ENCODE measurements at regions of chr16 and their contacts with region 1.

Region 1: DNA sequence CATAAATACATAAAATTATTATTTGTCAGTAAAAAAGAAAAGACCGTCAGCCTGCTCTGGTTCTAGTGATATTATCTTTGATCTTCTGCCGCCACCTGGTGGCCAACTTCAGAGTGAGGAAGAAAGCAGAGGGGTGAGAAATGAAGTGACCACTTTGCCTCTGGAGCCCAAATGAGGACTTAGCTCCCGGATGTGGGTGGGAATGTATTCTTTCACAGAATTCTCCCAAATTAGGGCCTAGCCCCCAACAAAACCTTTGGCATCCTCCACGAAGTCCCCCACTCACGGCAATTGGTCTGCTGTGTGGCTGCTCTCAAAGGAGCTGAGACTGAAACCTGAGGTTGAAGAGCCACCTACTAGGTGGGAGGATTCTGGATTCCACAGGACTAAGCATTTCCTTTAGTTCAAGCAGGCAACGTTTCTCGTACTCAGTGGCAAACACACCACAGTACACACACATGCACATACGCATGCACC is 4.9 kb upstream of the ZNF267 start:
- DNase-seq: peak; percentile 94
- H3K4me3 Mint-ChIP-seq: peak overlapping the region; percentile 75
- H3K27ac Mint-ChIP-seq: peak overlapping the region; percentile 95
- H3K4me1 Mint-ChIP-seq: peaks cover 53% of the 10 kb centered on the region
- H3K27me3 Mint-ChIP-seq: peaks cover 5% of the 10 kb centered on the region

Region 2: GRCh38 chr16:30957456-30958174 is 911.1 kb before region 1 on chr16 and contains the start of gene SETD1A:
- intact Hi-C with region 1: loop called (anchors 10 kb)
- DNase-seq: peak; percentile 99
- H3K4me3 Mint-ChIP-seq: peak within 1 kb of the TSS; percentile 94
- H3K27ac Mint-ChIP-seq: peak within 1 kb of the TSS; percentile 99
- H3K4me1 Mint-ChIP-seq: peaks cover 32% of the 10 kb centered on the region
- H3K27me3 Mint-ChIP-seq: no peaks in the 10 kb centered on the region
- total RNA-seq, gene SETD1A: 30.7 and 31.5 TPM in 2 replicates

Region 3: GRCh38 chr16:31476303-31477219 is 392.2 kb before region 1 on chr16:
- intact Hi-C with region 1: loop called (anchors 5 kb)
- DNase-seq: peak; percentile 93
- H3K4me3 Mint-ChIP-seq: peak overlapping the region; percentile 90
- H3K27ac Mint-ChIP-seq: peak overlapping the region; percentile 66
- H3K4me1 Mint-ChIP-seq: peaks cover 17% of the 10 kb centered on the region
- H3K27me3 Mint-ChIP-seq: peaks cover 43% of the 10 kb centered on the region

Region 4: DNA sequence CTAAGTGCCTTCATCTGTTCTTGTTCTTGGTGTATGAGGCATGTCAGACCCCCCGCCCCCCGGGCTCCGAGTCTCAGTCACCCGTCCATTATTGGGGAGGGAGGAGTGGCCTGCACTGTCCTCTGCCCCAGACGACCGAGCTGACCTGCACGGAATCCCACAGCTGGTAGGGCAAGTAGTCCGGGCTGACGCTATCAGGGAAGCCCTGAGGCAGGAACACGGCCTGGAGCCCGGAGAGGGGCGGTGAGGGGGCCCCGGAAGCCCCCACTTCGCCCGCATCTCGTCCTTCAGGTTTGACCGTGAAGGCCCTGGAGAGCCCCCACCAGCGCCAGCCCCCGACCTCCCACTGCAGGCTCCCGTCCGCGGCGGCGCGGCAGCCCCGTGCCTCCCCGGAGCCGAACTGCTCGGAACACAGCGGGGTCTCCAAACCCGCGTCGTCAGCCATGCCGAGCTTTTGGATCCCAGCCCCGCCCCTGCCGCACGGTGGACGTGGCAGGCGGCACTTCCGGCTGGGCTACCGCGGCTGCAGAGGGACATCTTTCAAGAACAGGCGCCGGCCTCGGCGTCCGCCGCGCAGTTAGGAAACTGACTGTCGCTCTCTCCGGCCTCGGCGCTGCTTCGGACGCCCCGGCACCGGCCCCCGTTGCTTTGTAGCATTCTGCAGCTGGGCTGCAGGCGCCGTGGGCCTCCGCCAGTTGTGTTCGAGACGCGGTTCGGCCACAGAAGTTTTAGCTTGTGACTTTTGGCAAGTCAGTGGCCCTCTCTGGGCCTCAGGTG is 360.6 kb before region 1 on chr16 and contains the start of gene RUSF1:
- intact Hi-C with region 1: loop called (anchors 2 kb)
- DNase-seq: peak; percentile 96
- H3K4me3 Mint-ChIP-seq: peak within 1 kb of the TSS; percentile 95
- H3K27ac Mint-ChIP-seq: peak within 1 kb of the TSS; percentile 94
- H3K4me1 Mint-ChIP-seq: peaks cover 38% of the 10 kb centered on the region
- H3K27me3 Mint-ChIP-seq: no peaks in the 10 kb centered on the region
- total RNA-seq, gene RUSF1: 40.9 and 41.1 TPM in 2 replicates

Region 5: GRCh38 chr16:31713071-31713944 is 155.4 kb before region 1 on chr16:
- intact Hi-C with region 1: loop called (anchors 2 kb)
- DNase-seq: peak; percentile 97
- H3K4me3 Mint-ChIP-seq: peak overlapping the region; percentile 99
- H3K27ac Mint-ChIP-seq: peak overlapping the region; percentile 99
- H3K4me1 Mint-ChIP-seq: peaks cover 30% of the 10 kb centered on the region
- H3K27me3 Mint-ChIP-seq: no peaks in the 10 kb centered on the region

Region 6: DNA sequence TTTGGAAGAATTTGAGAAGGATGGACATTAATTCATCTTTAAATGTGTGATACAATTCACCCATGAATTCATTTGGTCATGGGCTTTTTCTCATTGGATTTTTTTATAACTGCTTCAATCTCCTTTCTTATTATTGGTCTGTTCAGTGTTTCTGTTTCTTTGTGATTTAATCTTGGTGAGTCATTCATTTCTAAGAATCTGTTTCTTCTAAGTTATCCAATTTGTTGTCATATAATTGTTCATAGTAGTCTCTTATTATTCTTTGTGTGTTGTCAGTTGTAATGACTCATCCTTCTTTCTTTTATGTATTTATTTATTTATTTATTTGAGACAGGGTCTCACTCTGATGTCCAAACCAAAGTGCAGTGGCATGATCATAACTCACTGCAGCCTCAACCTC is 141.2 kb before region 1 on chr16:
- intact Hi-C with region 1: no loop called
- DNase-seq: no peak
- H3K4me3 Mint-ChIP-seq: no peak overlapping the region
- H3K27ac Mint-ChIP-seq: no peak overlapping the region
- H3K4me1 Mint-ChIP-seq: peaks cover 3% of the 10 kb centered on the region
- H3K27me3 Mint-ChIP-seq: no peaks in the 10 kb centered on the region

Region 7: DNA sequence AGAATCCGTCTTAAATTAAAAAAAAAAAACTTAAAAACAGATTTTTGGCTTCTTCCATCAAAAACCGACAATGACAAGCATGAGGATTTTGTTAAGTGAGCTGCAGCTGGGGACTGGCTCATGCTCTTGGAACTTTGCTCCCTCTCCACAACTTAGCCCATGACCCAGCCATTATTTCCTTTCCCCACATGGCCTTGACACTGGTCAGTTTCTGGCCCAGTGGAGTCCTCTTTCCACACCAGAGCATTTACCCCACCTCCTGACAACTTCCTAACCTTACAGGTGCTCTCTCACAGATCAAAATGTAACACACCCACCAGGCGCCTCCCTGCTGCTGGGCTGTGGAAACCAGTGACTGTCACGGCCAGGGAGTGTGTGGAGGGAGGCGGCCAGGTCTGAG is 57.9 kb before region 1 on chr16:
- intact Hi-C with region 1: no loop called
- DNase-seq: no peak
- H3K4me3 Mint-ChIP-seq: no peak overlapping the region
- H3K27ac Mint-ChIP-seq: no peak overlapping the region
- H3K4me1 Mint-ChIP-seq: no peaks in the 10 kb centered on the region
- H3K27me3 Mint-ChIP-seq: no peaks in the 10 kb centered on the region

Measured in activated CD4-positive, alpha-beta T cell treated with anti-CD3 and anti-CD28 coated beads, Interleukin-2, amount 10 ng/mL, durations not matched to agents 24 days and 14 days (primary cell).